CD8-positive, alpha-beta T cell (primary cell): ENCODE measurements at regions of chrX and their contacts with region 1.

Region 1: DNA sequence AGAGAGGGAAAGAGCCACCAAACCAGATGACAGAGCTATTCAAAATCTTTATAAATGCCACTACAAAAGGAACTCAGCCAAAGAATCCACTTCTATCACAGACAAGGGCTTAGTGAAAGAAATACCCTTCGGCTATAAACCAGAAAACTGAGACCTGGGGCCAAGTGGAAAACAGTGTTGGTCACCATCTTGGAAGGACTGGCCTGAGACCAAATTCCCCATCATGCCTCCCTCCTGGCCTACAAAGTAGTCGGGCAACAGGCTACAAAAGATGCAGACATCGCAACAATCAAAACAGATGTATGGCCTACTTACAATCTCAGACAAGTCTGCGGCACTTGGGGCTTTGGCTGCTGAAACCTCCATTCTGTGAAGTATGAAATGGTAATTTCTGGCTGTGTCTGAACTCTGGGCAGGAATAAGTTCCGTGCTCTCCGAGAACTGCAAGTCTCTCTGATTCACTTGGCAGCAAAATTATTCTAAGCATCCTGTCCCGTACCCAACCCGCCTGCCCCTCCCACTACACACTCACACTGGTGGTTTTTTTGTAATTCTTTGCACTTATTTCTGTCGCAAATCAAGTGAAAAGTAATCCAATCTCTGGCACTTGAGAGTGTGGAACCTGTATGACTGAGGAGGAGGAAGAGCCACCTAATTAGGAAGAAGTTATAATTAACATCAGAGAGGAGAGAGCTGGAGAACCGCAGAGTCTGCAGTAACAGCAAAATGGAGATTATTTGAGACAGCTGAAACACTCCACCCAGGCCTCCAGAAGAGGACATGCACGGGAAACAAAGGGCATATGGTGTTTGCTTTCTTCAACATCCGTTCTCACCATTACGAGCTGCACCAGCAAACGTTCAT is 87.8 kb downstream of the SH3KBP1 start:
- DNase-seq: peak in 8 of 9 experiments; percentile 31 to 77 (median 60)
- ATAC-seq: peak; percentile 81
- H3K4me3 ChIP-seq: peak overlapping the region; percentile 45 to 60
- H3K4me3 Mint-ChIP-seq: peak overlapping the region; percentile 91
- H3K27ac ChIP-seq: peak overlapping the region; percentile 63 to 73
- H3K27ac Mint-ChIP-seq: peak overlapping the region; percentile 98
- H3K4me1 ChIP-seq: peaks cover 51% of the 10 kb centered on the region
- H3K4me1 Mint-ChIP-seq: peaks cover 68% of the 10 kb centered on the region
- H3K27me3 ChIP-seq: no peaks in the 10 kb centered on the region
- H3K27me3 Mint-ChIP-seq: no peaks in the 10 kb centered on the region
- CTCF ChIP-seq: no peak

Region 2: GRCh38 chrX:19638823-19639455 is 160.6 kb before region 1 on chrX:
- CTCF ChIA-PET with region 1: no interaction called
- POLR2A ChIA-PET with region 1: no interaction called
- intact Hi-C with region 1: no loop called
- DNase-seq: no peak
- ATAC-seq: no peak
- H3K4me3 ChIP-seq: no peak overlapping the region
- H3K4me3 Mint-ChIP-seq: no peak overlapping the region
- H3K27ac ChIP-seq: no peak overlapping the region
- H3K27ac Mint-ChIP-seq: peak overlapping the region; percentile 52
- H3K4me1 ChIP-seq: no peaks in the 10 kb centered on the region
- H3K4me1 Mint-ChIP-seq: peaks cover 28% of the 10 kb centered on the region
- H3K27me3 ChIP-seq: no peaks in the 10 kb centered on the region
- H3K27me3 Mint-ChIP-seq: no peaks in the 10 kb centered on the region
- CTCF ChIP-seq: no peak

Region 3: DNA sequence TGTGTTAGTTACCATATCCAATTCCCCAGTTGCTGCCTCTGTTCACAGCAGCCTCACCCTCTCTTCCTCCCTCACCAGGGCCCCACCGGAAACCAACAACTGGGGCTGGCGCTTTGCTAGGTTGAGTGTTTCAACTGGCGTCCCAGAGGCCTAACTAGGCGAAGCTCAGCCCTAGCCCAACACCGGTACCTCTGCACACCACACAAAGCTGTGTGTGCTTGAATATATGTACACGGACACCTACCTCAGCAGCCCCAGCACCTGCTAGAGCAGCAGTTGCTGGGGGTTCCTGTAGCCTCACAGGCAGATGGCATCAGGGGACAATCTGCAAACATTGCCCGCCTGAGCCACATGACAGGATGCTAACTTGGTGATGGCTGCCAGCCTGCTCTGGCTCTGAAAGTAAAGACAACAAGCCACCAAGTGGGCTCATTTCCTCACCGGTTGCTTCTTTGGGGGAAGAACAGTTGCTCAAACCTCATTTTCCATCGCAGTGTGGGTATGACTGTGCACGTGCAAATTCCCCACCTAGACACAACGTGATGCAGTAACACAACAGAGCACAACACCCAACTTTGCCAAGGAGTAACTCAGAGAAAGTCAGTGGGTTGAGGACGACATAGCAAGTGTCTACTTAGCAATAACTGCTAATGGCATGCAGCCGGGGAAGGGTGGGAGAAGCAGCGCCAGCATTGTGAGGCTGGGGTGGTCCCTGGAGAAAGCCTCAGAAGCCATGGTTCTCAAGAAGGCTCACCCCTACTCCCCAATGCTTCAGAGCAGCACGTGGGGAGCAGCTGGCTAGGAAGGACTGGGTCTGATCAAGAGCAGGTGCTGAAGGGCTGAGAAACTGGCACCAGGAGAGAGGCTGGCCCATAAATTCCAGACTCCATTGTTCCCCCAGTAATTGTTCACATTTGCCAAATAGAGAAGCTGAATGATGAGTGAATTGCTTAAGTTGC is 51.6 kb before region 1 on chrX:
- CTCF ChIA-PET with region 1: interaction called, 9 read pairs
- POLR2A ChIA-PET with region 1: interaction called, 20 read pairs
- intact Hi-C with region 1: loop called (anchors 2 to 5 kb)
- DNase-seq: peak; percentile 59 to 89 (median 77)
- ATAC-seq: peak; percentile 74
- H3K4me3 ChIP-seq: peak overlapping the region in 1 of 2 experiments; percentile 15
- H3K4me3 Mint-ChIP-seq: peak overlapping the region; percentile 56
- H3K27ac ChIP-seq: peak overlapping the region; percentile 85 to 89
- H3K27ac Mint-ChIP-seq: peak overlapping the region; percentile 99
- H3K4me1 ChIP-seq: peaks cover 99% of the 10 kb centered on the region
- H3K4me1 Mint-ChIP-seq: peaks cover 93% of the 10 kb centered on the region
- H3K27me3 ChIP-seq: no peaks in the 10 kb centered on the region
- H3K27me3 Mint-ChIP-seq: no peaks in the 10 kb centered on the region
- CTCF ChIP-seq: no peak